K562 (cell line): ENCODE measurements at regions of chr19 and their contacts with region 1.

Region 1: DNA sequence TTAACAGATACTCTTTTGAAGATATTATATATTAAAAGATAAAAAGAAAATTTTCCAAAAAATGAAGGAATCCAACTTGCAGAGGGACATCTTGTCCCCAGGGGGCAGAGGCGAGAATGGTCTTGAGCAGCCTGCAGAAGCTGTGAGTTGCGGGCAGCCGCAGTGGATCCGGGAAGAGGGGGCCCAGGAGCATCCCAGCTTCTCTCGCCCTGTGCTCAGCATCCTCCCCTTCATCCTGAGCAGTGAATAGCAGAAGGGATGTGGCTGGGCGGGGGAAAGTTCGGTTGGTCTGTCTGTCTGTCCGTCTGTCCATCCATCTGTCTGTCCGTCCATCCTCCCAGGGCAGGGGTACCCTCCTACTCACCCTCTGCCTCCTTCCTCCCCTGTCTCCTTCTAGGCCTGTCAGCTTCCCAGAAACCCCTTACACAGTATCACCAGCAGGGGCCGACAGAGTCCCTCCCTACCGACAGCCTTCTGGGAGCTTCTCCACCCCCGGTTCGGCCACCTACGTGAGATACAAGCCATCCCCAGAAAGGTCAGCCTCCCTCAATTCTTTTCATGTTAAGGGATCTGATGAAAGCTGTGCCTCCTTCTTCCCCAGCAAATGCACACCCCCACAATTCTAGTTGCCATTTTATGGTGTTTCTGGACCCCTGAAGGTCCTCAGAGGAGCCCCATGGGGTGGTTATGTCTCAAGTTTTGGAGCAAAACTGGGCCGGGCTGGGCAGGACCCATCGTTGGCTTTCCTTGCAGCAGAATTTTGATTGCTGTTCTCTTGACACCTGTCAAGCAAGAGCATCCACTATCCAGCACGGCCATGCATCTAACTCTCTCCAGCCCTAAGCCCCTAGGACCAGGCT is 81.6 kb downstream of the DPF1 start:
- DNase-seq: peak; percentile 75 to 85 (median 80)
- ATAC-seq: peak; percentile 94
- H3K4me3 ChIP-seq: no peak overlapping the region
- H3K27ac ChIP-seq: no peak overlapping the region
- H3K4me1 ChIP-seq: peaks cover 8 to 16% of the 10 kb centered on the region in 2 experiments; a peak in 4 of 5 replicates
- H3K27me3 ChIP-seq: no peaks in the 10 kb centered on the region
- CTCF ChIP-seq: peak; percentile 93 to 96 (median 96)
- EP300 ChIP-seq: no peak
- POLR2A ChIP-seq: no peak
- RAD21 ChIP-seq: peak; percentile 78 to 91

Region 2: DNA sequence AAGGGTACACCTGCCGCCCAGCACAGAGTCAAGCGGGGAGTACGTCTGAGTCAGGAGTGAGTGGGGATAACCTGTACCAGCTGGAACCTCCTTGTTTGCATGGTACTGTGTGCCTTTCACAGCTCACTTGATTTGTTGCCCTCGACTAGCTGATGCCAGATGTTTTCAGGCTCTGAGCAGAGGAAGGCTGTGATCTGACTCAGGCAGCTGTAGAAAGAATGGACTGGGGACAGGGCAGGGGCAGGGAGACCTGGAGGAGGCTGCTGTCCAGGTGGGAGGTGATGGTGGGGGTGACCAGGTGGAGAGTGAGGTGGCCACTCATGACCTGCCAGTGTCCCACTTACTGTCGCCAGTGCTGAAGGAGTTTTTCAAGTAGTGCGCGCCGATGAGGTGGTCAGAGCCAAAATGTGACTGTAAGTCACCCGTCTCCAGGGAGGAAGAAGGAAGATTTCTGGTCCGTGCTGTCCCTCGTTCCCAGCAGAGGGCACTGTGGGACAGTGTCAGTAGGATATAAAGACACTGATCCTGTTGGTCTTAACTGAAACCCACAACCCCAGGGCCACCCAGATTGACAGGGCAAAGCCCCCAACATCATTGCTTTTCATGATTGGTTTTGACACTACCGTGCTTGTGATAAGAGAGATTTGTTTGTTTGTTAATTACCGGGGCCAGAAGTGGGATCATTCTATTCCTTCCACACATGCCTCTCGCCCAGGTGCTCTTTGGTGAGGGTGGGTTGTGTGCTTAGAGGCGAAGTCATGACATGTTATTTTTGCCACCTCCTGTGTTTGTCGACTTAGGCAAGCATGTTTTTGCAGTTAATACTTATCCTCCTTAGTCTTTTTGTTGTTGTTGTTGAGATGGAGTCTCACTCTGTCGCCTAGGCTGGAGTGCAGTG is 46.7 kb before region 1 on chr19:
- CTCF ChIA-PET with region 1: no interaction called
- POLR2A ChIA-PET with region 1: no interaction called
- in situ Hi-C with region 1: no loop called
- intact Hi-C with region 1: loop called (anchors 5 kb)
- DNase-seq: peak; percentile 73 to 85 (median 75)
- ATAC-seq: peak; percentile 98
- H3K4me3 ChIP-seq: no peak overlapping the region
- H3K27ac ChIP-seq: no peak overlapping the region
- H3K4me1 ChIP-seq: peaks cover 0 to 6% of the 10 kb centered on the region in 2 experiments; a peak in 2 of 5 replicates
- H3K27me3 ChIP-seq: no peaks in the 10 kb centered on the region
- CTCF ChIP-seq: peak; percentile 74 to 92 (median 84)
- EP300 ChIP-seq: no peak
- POLR2A ChIP-seq: no peak
- RAD21 ChIP-seq: peak; percentile 28 to 81

Region 3: DNA sequence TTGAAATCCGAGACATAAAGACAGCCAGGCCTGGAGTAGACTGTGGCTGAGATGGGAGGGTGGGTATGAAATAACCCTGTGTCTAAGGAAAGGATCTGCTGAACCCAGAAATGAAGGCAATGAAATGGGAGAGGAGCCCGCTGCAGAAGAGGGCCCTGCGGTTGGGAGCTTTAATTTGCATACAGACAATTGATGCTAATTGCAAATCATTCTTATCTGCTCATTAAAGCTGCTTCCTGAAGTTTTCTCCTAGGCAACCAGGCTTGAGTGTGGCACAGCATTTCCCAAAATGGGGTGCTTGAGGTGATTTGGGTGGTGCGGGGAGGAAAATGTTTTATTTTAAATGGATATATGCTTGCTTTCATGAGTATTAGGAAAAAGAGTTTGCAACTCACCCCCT is 26.2 kb after region 1 on chr19:
- CTCF ChIA-PET with region 1: no interaction called
- POLR2A ChIA-PET with region 1: no interaction called
- in situ Hi-C with region 1: no loop called
- intact Hi-C with region 1: no loop called
- DNase-seq: no peak
- ATAC-seq: no peak
- H3K4me3 ChIP-seq: no peak overlapping the region
- H3K27ac ChIP-seq: no peak overlapping the region
- H3K4me1 ChIP-seq: peaks cover 0 to 27% of the 10 kb centered on the region in 2 experiments; a peak in 2 of 5 replicates
- H3K27me3 ChIP-seq: no peaks in the 10 kb centered on the region
- CTCF ChIP-seq: no peak
- EP300 ChIP-seq: no peak
- POLR2A ChIP-seq: no peak
- RAD21 ChIP-seq: no peak

Region 4: GRCh38 chr19:38229585-38230073 is 87.2 kb after region 1 on chr19:
- CTCF ChIA-PET with region 1: interaction called, 7 read pairs
- POLR2A ChIA-PET with region 1: interaction called, 4 read pairs
- in situ Hi-C with region 1: no loop called
- intact Hi-C with region 1: loop called (anchors 5 kb)
- DNase-seq: peak; percentile 94 to 99 (median 98)
- ATAC-seq: peak; percentile 97
- H3K4me3 ChIP-seq: no peak overlapping the region; the same call in 1 of the 2 replicates
- H3K27ac ChIP-seq: no peak overlapping the region
- H3K4me1 ChIP-seq: peaks cover 4 to 37% of the 10 kb centered on the region in 2 experiments; a peak in 4 of 5 replicates
- H3K27me3 ChIP-seq: peaks cover 2 to 6% of the 10 kb centered on the region in 2 experiments; a peak in 2 of 5 replicates
- CTCF ChIP-seq: 0 out of 6 replicates have a peak, but pooled peaks of 1 of the 3 experiments have one; percentile 14
- EP300 ChIP-seq: no peak
- POLR2A ChIP-seq: no peak
- RAD21 ChIP-seq: no peak